ENCODE measurements at regions of chr11 and their contacts with region 1.

Region 1: GRCh38 chr11:96279018-96279895 is 63.7 kb downstream of the MAML2 start:
- DNase-seq: peak; percentile 92
- H3K4me3 ChIP-seq: no peak overlapping the region
- H3K27ac ChIP-seq: peak overlapping the region; percentile 89
- H3K4me1 ChIP-seq: peaks cover 36% of the 10 kb centered on the region
- H3K27me3 ChIP-seq: no peaks in the 10 kb centered on the region
- CTCF ChIP-seq: no peak

Region 2: GRCh38 chr11:96263361-96263763 is 15.9 kb before region 1 on chr11:
- CTCF ChIA-PET with region 1: no interaction called
- dilution Hi-C with region 1: no loop called
- in situ Hi-C with region 1: no loop called
- intact Hi-C with region 1: loop called (anchors 2 kb)
- DNase-seq: peak; percentile 83
- H3K4me3 ChIP-seq: no peak overlapping the region
- H3K27ac ChIP-seq: no peak overlapping the region
- H3K4me1 ChIP-seq: peaks cover 47% of the 10 kb centered on the region
- H3K27me3 ChIP-seq: no peaks in the 10 kb centered on the region
- CTCF ChIP-seq: no peak

Region 3: GRCh38 chr11:96314326-96315020 is 35.2 kb after region 1 on chr11:
- CTCF ChIA-PET with region 1: no interaction called
- dilution Hi-C with region 1: loop called (anchors 5 kb)
- in situ Hi-C with region 1: no loop called
- intact Hi-C with region 1: no loop called
- DNase-seq: peak; percentile 49
- H3K4me3 ChIP-seq: no peak overlapping the region
- H3K27ac ChIP-seq: peak overlapping the region; percentile 84
- H3K4me1 ChIP-seq: peaks cover 85% of the 10 kb centered on the region
- H3K27me3 ChIP-seq: no peaks in the 10 kb centered on the region
- CTCF ChIP-seq: no peak

Measured in mammary epithelial cell (primary cell).